Activated naive CD4-positive, alpha-beta T cell treated with anti-CD3 and anti-CD28 coated beads, Interleukin-2, amount 10 ng/mL, durations not matched to agents 7 days and 5 days (primary cell): ENCODE measurements at regions of chr2 and their contacts with region 1.

Region 1: DNA sequence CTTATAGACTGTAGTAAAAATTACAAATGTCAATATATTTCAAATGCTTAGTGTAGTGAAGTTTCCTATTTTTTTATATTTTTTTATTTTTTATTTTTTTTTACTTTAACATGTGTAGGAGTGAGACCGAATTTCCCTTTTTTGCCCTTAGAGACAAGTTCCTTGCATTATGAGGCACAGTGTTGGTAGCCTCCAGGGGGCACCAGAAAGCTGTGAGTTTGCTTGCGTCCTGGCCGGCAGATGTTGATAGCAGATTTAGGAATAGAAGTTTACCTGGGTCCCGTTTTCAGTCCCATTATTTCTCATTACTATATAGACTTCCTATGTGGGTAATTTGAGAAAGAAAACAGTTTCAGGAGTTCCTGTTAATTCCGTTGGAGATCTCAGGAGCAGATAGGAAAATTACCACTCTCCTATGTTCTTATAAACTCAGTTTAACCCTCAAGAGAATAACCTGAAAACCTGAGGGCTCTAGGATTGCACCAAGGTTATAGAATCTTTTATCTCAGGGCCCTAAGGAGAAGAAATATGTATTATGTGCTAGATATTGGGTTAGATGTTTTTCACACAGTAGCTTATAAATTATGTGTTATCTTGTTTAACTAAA is 157.5 kb upstream of the SESTD1 start:
- DNase-seq: peak; percentile 64
- H3K4me3 Mint-ChIP-seq: no peak overlapping the region
- H3K27ac Mint-ChIP-seq: no peak overlapping the region
- H3K4me1 Mint-ChIP-seq: no peaks in the 10 kb centered on the region
- H3K27me3 Mint-ChIP-seq: peaks cover 17% of the 10 kb centered on the region

Region 2: DNA sequence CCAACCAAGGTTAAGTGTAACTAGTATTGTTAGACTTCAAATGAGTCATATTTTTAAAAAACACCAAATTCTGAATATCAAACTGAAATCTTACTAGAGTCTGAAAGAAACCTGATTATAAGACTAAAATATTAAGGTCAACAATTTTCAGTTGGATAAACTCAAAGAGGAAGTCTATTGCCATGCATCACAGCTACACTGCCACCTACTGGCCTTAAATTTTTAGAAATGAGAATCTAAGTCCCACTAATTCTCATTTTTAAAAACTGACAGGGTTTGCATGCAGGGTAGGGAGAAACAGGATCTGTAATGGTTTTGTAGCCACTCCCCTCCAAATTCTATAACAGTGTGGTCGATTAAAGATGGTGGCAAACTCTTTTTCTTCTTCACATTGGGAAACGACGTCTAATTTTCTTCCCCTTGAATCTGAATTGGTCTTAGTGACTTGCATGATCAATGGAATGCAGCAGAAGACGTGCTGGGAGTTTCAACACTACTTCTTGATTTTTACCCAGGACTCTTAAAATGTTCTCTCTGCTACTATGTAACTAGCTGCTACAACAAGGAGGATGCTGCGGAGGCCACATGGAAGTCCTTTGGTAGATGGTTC is 18.6 kb after region 1 on chr2:
- CTCF ChIA-PET with region 1: interaction called, 12 read pairs
- DNase-seq: no peak
- H3K4me3 Mint-ChIP-seq: no peak overlapping the region
- H3K27ac Mint-ChIP-seq: no peak overlapping the region
- H3K4me1 Mint-ChIP-seq: no peaks in the 10 kb centered on the region
- H3K27me3 Mint-ChIP-seq: peaks cover 11% of the 10 kb centered on the region

Region 3: DNA sequence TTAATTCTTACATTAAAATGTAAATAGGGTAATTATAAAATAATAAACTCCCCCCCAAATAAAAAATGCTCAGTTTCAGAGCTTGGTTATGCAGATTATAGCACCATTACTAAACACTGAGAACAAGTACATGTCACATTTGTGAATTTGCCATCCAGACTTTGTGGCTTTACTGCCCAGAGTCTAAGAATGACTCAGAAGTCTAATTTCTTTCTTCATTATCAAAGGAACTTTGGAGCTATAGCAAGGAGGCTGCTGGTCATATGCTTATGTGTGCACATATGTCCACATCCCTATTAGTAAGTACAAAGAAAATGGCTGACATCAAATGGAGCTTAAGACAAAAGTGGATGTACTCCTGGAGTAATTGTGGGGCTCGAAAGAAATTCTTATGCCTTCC is 91.0 kb after region 1 on chr2:
- CTCF ChIA-PET with region 1: no interaction called
- DNase-seq: no peak
- H3K4me3 Mint-ChIP-seq: no peak overlapping the region
- H3K27ac Mint-ChIP-seq: no peak overlapping the region
- H3K4me1 Mint-ChIP-seq: no peaks in the 10 kb centered on the region
- H3K27me3 Mint-ChIP-seq: no peaks in the 10 kb centered on the region